PC-9 (cell line): ENCODE measurements at regions of chr5 and their contacts with region 1.

Region 1: GRCh38 chr5:132419502-132420468 is 50.3 kb downstream of the SLC22A5 start:
- DNase-seq: peak; percentile 73 to 82
- H3K4me3 ChIP-seq: no peak overlapping the region
- H3K27ac ChIP-seq: no peak overlapping the region
- H3K4me1 ChIP-seq: peaks cover 74% of the 10 kb centered on the region
- H3K27me3 ChIP-seq: no peaks in the 10 kb centered on the region
- CTCF ChIP-seq: peak; percentile 86

Region 2: GRCh38 chr5:132369474-132370180 is 50.2 kb before region 1 on chr5 and contains the start of gene SLC22A5:
- CTCF ChIA-PET with region 1: no interaction called
- POLR2A ChIA-PET with region 1: interaction called, 3 read pairs
- intact Hi-C with region 1: loop called (anchors 5 kb)
- DNase-seq: peak; percentile 63 to 83
- H3K4me3 ChIP-seq: peak within 1 kb of the TSS; percentile 75
- H3K27ac ChIP-seq: peak within 1 kb of the TSS; percentile 45
- H3K4me1 ChIP-seq: peaks cover 67% of the 10 kb centered on the region
- H3K27me3 ChIP-seq: no peaks in the 10 kb centered on the region
- CTCF ChIP-seq: no peak
- total RNA-seq, gene SLC22A5: 13.5 and 15.2 TPM in 2 replicates

Region 3: GRCh38 chr5:132446669-132447068 is 26.9 kb after region 1 on chr5:
- CTCF ChIA-PET with region 1: no interaction called
- POLR2A ChIA-PET with region 1: interaction called, 10 read pairs
- intact Hi-C with region 1: no loop called
- DNase-seq: peak; percentile 62 to 73
- H3K4me3 ChIP-seq: no peak overlapping the region
- H3K27ac ChIP-seq: peak overlapping the region; percentile 88
- H3K4me1 ChIP-seq: peaks cover 55% of the 10 kb centered on the region
- H3K27me3 ChIP-seq: no peaks in the 10 kb centered on the region
- CTCF ChIP-seq: no peak

Region 4: DNA sequence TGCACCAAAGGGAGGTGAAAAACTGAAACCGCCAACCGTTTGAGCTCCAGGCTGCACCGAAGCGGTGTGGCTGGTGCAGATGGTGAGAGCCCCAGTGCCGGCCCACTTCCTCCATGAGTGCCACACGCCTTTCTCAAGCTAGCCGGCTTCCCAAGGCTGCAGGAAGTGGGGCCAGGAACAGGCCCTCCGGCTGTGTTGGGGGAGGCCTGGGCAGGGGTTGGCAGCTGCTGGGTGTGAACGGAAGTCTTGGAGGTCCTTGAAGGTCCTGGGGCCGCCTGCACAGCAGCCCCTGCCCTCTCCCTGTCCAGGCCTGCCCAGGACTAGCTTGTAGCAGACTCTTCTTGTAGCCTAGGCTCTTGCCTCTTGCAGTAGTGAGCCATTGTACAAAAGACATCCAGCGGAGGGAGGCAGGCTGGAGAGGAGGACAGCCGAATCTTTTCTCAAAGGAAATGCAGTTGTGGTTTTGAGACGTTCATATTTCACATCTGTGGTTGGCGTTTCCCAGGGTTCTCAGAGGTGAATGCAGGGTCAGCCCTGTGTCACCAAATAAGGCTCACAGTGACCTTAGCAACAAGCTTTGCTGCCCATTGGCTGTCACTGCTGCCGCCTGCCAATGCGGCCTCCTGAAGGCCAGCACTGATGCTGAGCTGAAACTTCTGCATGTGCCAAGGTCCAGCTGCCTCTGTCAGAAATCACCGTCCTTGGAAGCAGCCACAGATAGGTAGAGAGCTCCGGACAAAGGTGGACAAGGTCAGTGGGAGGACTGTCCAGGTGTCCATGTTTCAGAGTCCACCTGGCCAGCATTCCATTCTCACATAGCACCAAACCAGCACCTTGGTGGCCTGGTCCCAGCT is 46.9 kb after region 1 on chr5:
- CTCF ChIA-PET with region 1: interaction called, 6 read pairs
- POLR2A ChIA-PET with region 1: interaction called, 5 read pairs
- intact Hi-C with region 1: loop called (anchors 1 kb)
- DNase-seq: peak in 1 of 2 experiments; percentile 59
- H3K4me3 ChIP-seq: no peak overlapping the region
- H3K27ac ChIP-seq: no peak overlapping the region
- H3K4me1 ChIP-seq: peaks cover 29% of the 10 kb centered on the region
- H3K27me3 ChIP-seq: no peaks in the 10 kb centered on the region
- CTCF ChIP-seq: no peak

Region 5: GRCh38 chr5:132859889-132860437 is 440.2 kb after region 1 on chr5:
- CTCF ChIA-PET with region 1: no interaction called
- POLR2A ChIA-PET with region 1: no interaction called
- intact Hi-C with region 1: no loop called
- DNase-seq: no peak
- H3K4me3 ChIP-seq: no peak overlapping the region
- H3K27ac ChIP-seq: no peak overlapping the region
- H3K4me1 ChIP-seq: no peaks in the 10 kb centered on the region
- H3K27me3 ChIP-seq: no peaks in the 10 kb centered on the region
- CTCF ChIP-seq: no peak